Endothelial cell of umbilical vein (primary cell): ENCODE measurements at regions of chr6 and their contacts with region 1.

Region 1: GRCh38 chr6:103707596-103708325 is 1152.0 kb downstream of the HACE1 start:
- DNase-seq: no peak
- H3K4me3 ChIP-seq: no peak overlapping the region
- H3K27ac ChIP-seq: no peak overlapping the region
- H3K4me1 ChIP-seq: no peaks in the 10 kb centered on the region
- H3K27me3 ChIP-seq: no peaks in the 10 kb centered on the region
- CTCF ChIP-seq: no peak
- POLR2A ChIP-seq: no peak

Region 2: DNA sequence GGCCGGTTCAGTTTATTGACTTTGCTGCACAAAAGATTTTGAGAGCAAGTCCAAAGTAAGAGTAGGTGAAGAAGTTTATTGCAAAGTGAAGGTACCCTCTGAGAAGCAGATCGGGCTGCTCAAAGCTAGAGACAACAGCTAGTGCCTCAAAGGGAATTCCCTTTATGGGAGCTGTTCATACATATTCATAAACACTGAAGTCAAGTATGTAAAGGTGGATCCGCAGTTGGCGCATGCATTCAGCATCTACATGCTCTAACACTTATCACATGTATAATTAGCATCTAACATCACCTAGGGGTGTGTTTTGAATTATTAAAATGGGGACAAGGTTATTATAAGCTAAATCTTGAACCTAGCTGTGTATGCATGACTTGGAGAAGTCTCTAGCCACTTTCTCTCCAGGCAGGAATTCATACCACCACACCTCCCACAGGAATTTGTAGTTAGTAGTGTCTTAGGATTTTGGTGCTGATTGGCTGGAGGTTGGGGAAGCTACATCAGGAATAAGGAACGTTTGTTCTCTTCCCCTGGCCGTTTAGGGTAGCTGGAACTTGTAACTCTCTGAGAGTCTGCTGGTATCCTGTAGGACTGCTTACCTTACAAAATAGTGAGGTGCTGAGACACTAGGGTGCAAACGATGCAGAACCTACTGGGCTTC is 680.4 kb before region 1 on chr6:
- CTCF ChIA-PET with region 1: no interaction called
- POLR2A ChIA-PET with region 1: no interaction called
- dilution Hi-C with region 1: no loop called
- intact Hi-C with region 1: loop called (anchors 10 kb)
- DNase-seq: no peak
- H3K4me3 ChIP-seq: no peak overlapping the region
- H3K27ac ChIP-seq: no peak overlapping the region
- H3K4me1 ChIP-seq: no peaks in the 10 kb centered on the region
- H3K27me3 ChIP-seq: no peaks in the 10 kb centered on the region
- CTCF ChIP-seq: no peak
- POLR2A ChIP-seq: no peak